GM12878 (cell line): ENCODE measurements at regions of chr11 and their contacts with region 1.

Region 1: GRCh38 chr11:88337181-88337986 is at the start of gene CTSC:
- DNase-seq: no peak
- ATAC-seq: peak; percentile 82
- H3K4me3 ChIP-seq: peak within 1 kb of the TSS; percentile 99
- H3K27ac ChIP-seq: peak within 1 kb of the TSS; percentile 84
- H3K4me1 ChIP-seq: no peaks in the 10 kb centered on the region; the same call in 1 of the 2 replicates
- H3K27me3 ChIP-seq: no peaks in the 10 kb centered on the region
- CTCF ChIP-seq: no peak
- EP300 ChIP-seq: peak in 1 of 2 experiments; percentile 48; a peak in 1 of 4 replicates
- POLR2A ChIP-seq: peak; percentile 100
- RAD21 ChIP-seq: peak; percentile 20; the same call in 1 of the 2 replicates
- polyA plus RNA-seq, gene CTSC: 709 to 1,123 TPM

Region 2: DNA sequence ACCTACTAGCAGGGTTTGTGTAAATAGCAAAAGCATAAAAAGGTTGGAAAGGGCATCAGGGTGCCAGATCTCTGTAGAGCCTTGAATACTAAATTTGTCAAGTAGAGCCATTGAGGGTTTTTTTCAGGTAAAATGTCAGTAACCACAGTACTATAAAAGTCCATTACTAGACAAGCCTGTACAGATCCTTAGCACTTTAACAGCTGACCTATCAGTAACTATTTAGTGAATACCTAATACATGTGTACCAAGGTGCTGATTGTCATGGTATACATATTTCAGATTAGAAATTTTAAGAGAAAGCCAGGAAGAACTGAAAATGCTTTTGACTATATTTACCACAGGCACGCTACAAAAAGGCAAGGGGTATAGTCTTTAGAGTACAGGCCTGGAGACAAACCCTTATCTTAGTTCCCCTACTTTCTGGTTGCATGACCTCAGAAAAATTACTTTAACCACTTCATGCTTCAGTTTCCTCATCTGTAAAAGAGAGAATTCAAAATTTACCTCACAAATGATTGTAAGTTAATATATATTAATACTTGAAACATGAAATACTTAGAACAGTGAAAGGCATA is 220.0 kb before region 1 on chr11:
- CTCF ChIA-PET with region 1: no interaction called
- POLR2A ChIA-PET with region 1: no interaction called
- RAD21 ChIA-PET with region 1: no interaction called
- SMC1A ChIA-PET with region 1: no interaction called
- in situ Hi-C with region 1: no loop called
- intact Hi-C with region 1: loop called (anchors 5 kb)
- DNase-seq: no peak
- ATAC-seq: peak; percentile 87
- H3K4me3 ChIP-seq: no peak overlapping the region
- H3K27ac ChIP-seq: no peak overlapping the region
- H3K4me1 ChIP-seq: peaks cover 5% of the 10 kb centered on the region; the same call in 1 of the 2 replicates
- H3K27me3 ChIP-seq: no peaks in the 10 kb centered on the region; a peak in 1 of 4 replicates
- CTCF ChIP-seq: no peak
- EP300 ChIP-seq: no peak
- POLR2A ChIP-seq: no peak
- RAD21 ChIP-seq: no peak

Region 3: DNA sequence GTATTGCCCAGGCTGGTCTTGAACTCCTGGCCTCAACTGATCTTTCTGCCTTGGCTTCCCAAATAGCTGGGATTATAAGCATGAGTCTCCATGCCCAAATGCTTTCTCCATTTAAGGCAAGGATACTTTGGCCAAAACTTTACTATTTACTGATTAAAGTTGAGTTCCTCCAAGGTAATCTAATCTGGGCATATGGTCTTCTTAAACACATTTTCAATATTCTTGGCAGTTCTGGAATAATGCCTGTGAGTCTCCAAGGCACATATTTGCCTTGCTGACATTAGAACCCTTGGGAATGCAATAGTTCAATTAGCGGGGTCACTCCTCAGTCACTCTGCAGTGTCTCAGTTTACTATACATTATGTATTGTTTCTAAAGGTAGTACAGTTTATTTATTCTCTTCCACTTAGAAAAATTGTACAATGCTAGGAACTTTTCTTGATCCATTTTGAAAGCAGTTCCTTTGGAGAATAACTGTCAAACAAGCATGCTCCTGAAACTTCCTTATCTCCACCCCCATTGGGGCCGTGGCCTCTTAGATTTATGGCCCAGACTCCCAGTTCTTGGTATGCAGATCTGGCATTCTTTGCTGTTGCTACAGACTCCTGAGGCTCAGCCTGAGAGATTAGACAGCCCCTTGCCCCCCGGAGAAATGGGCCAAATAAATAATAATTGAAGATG is 149.0 kb before region 1 on chr11:
- CTCF ChIA-PET with region 1: no interaction called
- POLR2A ChIA-PET with region 1: no interaction called
- RAD21 ChIA-PET with region 1: no interaction called
- SMC1A ChIA-PET with region 1: no interaction called
- in situ Hi-C with region 1: no loop called
- intact Hi-C with region 1: no loop called
- DNase-seq: no peak
- ATAC-seq: no peak
- H3K4me3 ChIP-seq: no peak overlapping the region
- H3K27ac ChIP-seq: no peak overlapping the region
- H3K4me1 ChIP-seq: peaks cover 6% of the 10 kb centered on the region
- H3K27me3 ChIP-seq: no peaks in the 10 kb centered on the region
- CTCF ChIP-seq: no peak
- EP300 ChIP-seq: no peak
- POLR2A ChIP-seq: no peak
- RAD21 ChIP-seq: no peak

Region 4: GRCh38 chr11:88246696-88247095 is 90.7 kb before region 1 on chr11:
- CTCF ChIA-PET with region 1: no interaction called
- POLR2A ChIA-PET with region 1: no interaction called
- RAD21 ChIA-PET with region 1: no interaction called
- SMC1A ChIA-PET with region 1: no interaction called
- in situ Hi-C with region 1: no loop called
- intact Hi-C with region 1: no loop called
- DNase-seq: no peak
- ATAC-seq: no peak
- H3K4me3 ChIP-seq: no peak overlapping the region
- H3K27ac ChIP-seq: no peak overlapping the region
- H3K4me1 ChIP-seq: no peaks in the 10 kb centered on the region
- H3K27me3 ChIP-seq: no peaks in the 10 kb centered on the region
- CTCF ChIP-seq: no peak
- EP300 ChIP-seq: no peak
- POLR2A ChIP-seq: no peak
- RAD21 ChIP-seq: no peak

Region 5: DNA sequence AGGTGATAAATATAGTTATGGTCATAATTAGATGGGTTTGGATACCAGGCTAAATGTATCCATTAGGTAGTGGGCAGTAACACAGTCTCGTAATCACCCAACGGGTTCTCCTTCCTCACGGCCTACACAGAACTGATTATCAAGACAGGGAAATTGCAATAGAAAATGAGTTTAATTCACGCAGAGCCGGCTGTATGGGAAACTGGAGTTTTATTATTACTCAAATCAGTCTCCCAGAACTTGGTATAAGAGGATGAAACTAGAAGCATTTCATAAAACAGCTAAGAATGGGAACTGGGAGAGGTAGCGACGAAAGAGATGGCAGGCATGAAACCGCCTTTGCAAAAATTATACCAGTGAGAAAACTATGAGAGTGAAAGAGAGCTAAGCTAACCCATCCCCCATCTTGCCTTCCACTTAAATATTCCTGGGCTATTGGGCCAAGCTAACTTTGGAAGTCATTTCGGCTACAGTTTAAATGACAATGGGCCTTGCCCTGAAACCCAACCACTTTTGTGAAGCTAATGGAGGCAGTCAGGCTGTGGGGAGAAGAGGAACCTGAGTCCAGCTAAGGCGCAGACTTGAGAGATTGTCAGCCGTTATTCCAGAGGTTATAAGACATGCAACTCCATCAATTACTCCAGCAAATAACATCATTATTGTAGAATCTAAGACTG is 29.5 kb before region 1 on chr11:
- CTCF ChIA-PET with region 1: interaction called, 13 read pairs
- POLR2A ChIA-PET with region 1: interaction called, 10 read pairs
- RAD21 ChIA-PET with region 1: interaction called, 32 read pairs
- SMC1A ChIA-PET with region 1: interaction called, 101 read pairs
- in situ Hi-C with region 1: no loop called
- intact Hi-C with region 1: no loop called
- DNase-seq: peak; percentile 81
- ATAC-seq: peak; percentile 78
- H3K4me3 ChIP-seq: peak overlapping the region; percentile 6; the same call in 1 of the 2 replicates
- H3K27ac ChIP-seq: peak overlapping the region; percentile 75
- H3K4me1 ChIP-seq: peaks cover 33% of the 10 kb centered on the region
- H3K27me3 ChIP-seq: no peaks in the 10 kb centered on the region
- CTCF ChIP-seq: no peak
- EP300 ChIP-seq: peak; percentile 47 to 76; a peak in 3 of 4 replicates
- POLR2A ChIP-seq: no peak
- RAD21 ChIP-seq: no peak

Region 6: GRCh38 chr11:88357323-88358039 is 20.1 kb after region 1 on chr11:
- CTCF ChIA-PET with region 1: interaction called, 21 read pairs
- POLR2A ChIA-PET with region 1: interaction called, 116 read pairs
- RAD21 ChIA-PET with region 1: interaction called, 299 read pairs
- SMC1A ChIA-PET with region 1: interaction called, 108 read pairs
- in situ Hi-C with region 1: no loop called
- intact Hi-C with region 1: loop called (anchors 1 kb)
- DNase-seq: peak; percentile 79
- ATAC-seq: peak; percentile 62
- H3K4me3 ChIP-seq: peak overlapping the region; percentile 23; the same call in 1 of the 2 replicates
- H3K27ac ChIP-seq: peak overlapping the region; percentile 89
- H3K4me1 ChIP-seq: peaks cover 53% of the 10 kb centered on the region
- H3K27me3 ChIP-seq: no peaks in the 10 kb centered on the region
- CTCF ChIP-seq: no peak
- EP300 ChIP-seq: peak; percentile 63 to 78
- POLR2A ChIP-seq: no peak
- RAD21 ChIP-seq: no peak

Region 7: GRCh38 chr11:88484873-88485621 is 147.7 kb after region 1 on chr11:
- CTCF ChIA-PET with region 1: no interaction called
- POLR2A ChIA-PET with region 1: no interaction called
- RAD21 ChIA-PET with region 1: interaction called, 3 read pairs
- SMC1A ChIA-PET with region 1: no interaction called
- in situ Hi-C with region 1: no loop called
- intact Hi-C with region 1: loop called (anchors 2 kb)
- DNase-seq: peak; percentile 27
- ATAC-seq: peak; percentile 94
- H3K4me3 ChIP-seq: no peak overlapping the region
- H3K27ac ChIP-seq: no peak overlapping the region
- H3K4me1 ChIP-seq: peaks cover 8% of the 10 kb centered on the region
- H3K27me3 ChIP-seq: no peaks in the 10 kb centered on the region
- CTCF ChIP-seq: peak; percentile 63 to 87 (median 79)
- EP300 ChIP-seq: no peak
- POLR2A ChIP-seq: no peak
- RAD21 ChIP-seq: peak; percentile 61